Endothelial cell of umbilical vein (primary cell): ENCODE measurements at regions of chr17 and their contacts with region 1.

Region 1: GRCh38 chr17:6913608-6914443 is 82.0 kb upstream of the ALOX12 start:
- DNase-seq: peak; percentile 62
- H3K4me3 ChIP-seq: no peak overlapping the region
- H3K27ac ChIP-seq: no peak overlapping the region
- H3K4me1 ChIP-seq: peaks cover 5% of the 10 kb centered on the region
- H3K27me3 ChIP-seq: peaks cover 36 to 42% of the 10 kb centered on the region in 2 experiments
- CTCF ChIP-seq: peak; percentile 82 to 84
- POLR2A ChIP-seq: no peak

Region 2: DNA sequence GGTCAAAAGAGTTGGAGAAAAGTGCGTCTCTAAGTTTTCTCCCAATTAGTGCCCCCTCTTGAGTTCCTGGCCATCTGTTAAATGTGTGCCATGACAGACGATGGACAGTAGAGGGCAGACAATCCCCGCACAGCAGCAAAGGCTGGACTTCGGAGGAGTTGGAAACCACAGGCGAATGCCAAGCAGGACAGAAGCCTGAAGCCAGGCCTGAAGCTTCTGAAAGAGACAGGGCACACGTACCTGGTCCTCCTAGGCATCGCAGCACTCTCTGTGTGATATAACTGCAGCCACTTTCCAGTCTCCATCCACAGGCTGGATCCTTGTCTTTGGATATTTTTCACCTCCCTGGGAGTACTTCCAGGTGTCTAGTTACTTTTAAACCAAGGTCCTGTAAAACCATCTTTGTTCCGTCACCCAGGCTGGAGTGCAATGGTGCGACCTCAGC is 247.7 kb before region 1 on chr17:
- CTCF ChIA-PET with region 1: interaction called, 23 read pairs
- POLR2A ChIA-PET with region 1: interaction called, 3 read pairs
- dilution Hi-C with region 1: no loop called
- intact Hi-C with region 1: loop called (anchors 2 kb)
- DNase-seq: peak; percentile 82
- H3K4me3 ChIP-seq: no peak overlapping the region
- H3K27ac ChIP-seq: no peak overlapping the region
- H3K4me1 ChIP-seq: no peaks in the 10 kb centered on the region
- H3K27me3 ChIP-seq: peaks cover 7 to 11% of the 10 kb centered on the region in 2 experiments
- CTCF ChIP-seq: peak; percentile 85 to 86
- POLR2A ChIP-seq: no peak

Region 3: GRCh38 chr17:6713130-6713917 is 200.5 kb before region 1 on chr17 and contains the start of gene SLC13A5:
- CTCF ChIA-PET with region 1: no interaction called
- POLR2A ChIA-PET with region 1: no interaction called
- dilution Hi-C with region 1: no loop called
- intact Hi-C with region 1: no loop called
- DNase-seq: peak; percentile 8
- H3K4me3 ChIP-seq: no peak within 1 kb of the TSS
- H3K27ac ChIP-seq: no peak within 1 kb of the TSS
- H3K4me1 ChIP-seq: no peaks in the 10 kb centered on the region
- H3K27me3 ChIP-seq: peaks cover 28 to 32% of the 10 kb centered on the region in 2 experiments
- CTCF ChIP-seq: peak; percentile 12 to 53
- POLR2A ChIP-seq: no peak
- total RNA-seq, gene SLC13A5: not detected in 2 replicates

Region 4: DNA sequence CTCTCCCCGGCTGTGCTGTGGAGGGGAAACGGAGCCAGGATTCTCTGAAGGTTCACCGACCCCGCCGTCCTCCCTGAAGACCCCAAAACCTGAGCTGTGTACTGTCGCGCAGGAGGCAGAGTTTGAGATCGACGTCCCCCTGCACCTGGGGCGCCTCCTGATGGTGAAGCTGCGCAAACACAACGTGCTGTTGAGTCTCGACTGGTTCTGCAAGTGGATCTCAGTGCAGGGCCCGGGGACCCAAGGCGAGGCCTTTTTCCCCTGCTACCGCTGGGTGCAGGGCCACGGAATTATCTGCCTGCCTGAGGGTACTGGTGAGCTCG is 19.7 kb before region 1 on chr17:
- CTCF ChIA-PET with region 1: interaction called, 13 read pairs
- POLR2A ChIA-PET with region 1: no interaction called
- dilution Hi-C with region 1: no loop called
- intact Hi-C with region 1: no loop called
- DNase-seq: peak; percentile 28
- H3K4me3 ChIP-seq: no peak overlapping the region
- H3K27ac ChIP-seq: no peak overlapping the region
- H3K4me1 ChIP-seq: no peaks in the 10 kb centered on the region
- H3K27me3 ChIP-seq: peaks cover 56 to 62% of the 10 kb centered on the region in 2 experiments
- CTCF ChIP-seq: peak; percentile 46 to 71
- POLR2A ChIP-seq: no peak

Region 5: DNA sequence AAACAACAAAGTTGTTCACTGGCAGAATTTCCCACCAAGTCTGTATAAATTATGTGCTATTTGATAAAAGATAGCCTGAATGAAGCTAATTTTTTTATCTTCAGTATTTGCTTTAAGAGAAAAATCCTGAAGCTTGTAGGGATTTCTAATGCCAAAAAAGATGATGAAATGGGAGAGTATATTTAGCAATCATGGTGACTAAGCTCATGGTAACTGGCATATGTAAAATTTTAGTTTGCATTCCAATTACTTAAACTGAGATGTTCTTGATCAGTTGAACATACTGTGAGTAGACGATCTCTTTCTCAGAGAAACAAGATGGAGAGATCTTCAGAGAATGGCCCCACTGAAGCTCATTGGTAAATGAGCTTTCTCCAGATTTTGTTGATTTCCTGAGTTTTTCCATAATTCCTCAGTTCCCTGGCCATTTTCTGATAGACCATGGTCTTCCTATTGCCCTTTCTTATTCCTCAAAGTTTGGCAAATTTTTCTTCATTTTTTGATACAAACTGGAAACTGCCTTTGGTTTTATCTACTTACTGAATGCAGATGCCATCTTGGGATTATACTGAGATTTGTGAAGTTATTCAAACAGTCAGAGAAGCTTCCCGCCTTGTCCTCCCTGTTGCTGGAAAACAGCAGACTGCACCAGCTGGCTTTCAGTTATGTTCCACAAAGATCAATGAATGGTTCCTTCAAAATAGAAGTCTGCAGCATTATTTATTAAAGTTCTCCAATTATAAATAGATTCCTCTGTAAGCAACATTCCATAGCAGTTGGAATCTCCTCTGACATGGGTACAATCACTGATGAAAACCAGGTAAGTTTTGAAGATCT is 13.7 kb after region 1 on chr17:
- CTCF ChIA-PET with region 1: interaction called, 47 read pairs
- POLR2A ChIA-PET with region 1: no interaction called
- dilution Hi-C with region 1: no loop called
- intact Hi-C with region 1: no loop called
- DNase-seq: no peak
- H3K4me3 ChIP-seq: no peak overlapping the region
- H3K27ac ChIP-seq: no peak overlapping the region
- H3K4me1 ChIP-seq: no peaks in the 10 kb centered on the region
- H3K27me3 ChIP-seq: peaks cover 18 to 39% of the 10 kb centered on the region in 2 experiments
- CTCF ChIP-seq: no peak
- POLR2A ChIP-seq: no peak

Region 6: DNA sequence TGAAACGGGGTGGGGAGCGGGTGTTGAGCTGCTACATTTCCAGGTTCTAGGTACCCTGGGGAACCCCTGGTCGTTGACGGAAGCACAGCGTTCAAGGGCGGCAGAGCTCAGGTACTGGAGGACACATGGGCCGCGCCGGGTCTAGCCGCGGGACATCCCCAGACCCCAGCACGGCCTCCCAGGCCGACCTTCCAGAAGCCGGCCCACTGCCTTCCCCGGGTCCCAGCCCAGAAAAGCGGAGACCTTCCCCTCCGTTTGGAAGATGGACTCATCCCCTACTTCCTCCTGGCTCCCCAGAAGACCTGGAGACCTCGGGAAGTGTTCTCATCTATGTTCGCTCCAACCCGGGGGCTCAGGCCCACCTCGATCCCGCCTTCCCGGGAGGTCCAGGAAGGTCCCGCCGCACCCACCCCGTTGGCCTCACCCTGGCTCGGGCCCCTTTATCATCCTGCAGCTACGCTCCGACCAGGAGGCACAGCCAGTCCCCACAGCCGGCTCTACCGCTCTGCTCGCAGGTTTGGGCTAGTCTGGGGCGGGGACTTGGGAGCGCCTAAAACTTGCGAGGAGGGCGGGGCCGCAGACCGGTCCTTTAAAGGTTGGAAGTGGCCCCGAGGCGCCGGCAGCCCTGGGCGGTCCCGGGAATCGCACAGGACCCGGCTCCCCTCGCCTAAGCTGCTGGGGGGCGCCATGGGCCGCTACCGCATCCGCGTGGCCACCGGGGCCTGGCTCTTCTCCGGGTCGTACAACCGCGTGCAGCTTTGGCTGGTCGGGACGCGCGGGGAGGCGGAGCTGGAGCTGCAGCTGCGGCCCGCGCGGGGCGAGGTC is 81.8 kb after region 1 on chr17 and contains the start of gene ALOX12:
- CTCF ChIA-PET with region 1: interaction called, 100 read pairs
- POLR2A ChIA-PET with region 1: no interaction called
- dilution Hi-C with region 1: no loop called
- intact Hi-C with region 1: no loop called
- DNase-seq: no peak
- H3K4me3 ChIP-seq: no peak within 1 kb of the TSS
- H3K27ac ChIP-seq: no peak within 1 kb of the TSS
- H3K4me1 ChIP-seq: no peaks in the 10 kb centered on the region
- H3K27me3 ChIP-seq: no peaks in the 10 kb centered on the region
- CTCF ChIP-seq: no peak
- POLR2A ChIP-seq: no peak
- total RNA-seq, gene ALOX12: not detected in 2 replicates

Region 7: DNA sequence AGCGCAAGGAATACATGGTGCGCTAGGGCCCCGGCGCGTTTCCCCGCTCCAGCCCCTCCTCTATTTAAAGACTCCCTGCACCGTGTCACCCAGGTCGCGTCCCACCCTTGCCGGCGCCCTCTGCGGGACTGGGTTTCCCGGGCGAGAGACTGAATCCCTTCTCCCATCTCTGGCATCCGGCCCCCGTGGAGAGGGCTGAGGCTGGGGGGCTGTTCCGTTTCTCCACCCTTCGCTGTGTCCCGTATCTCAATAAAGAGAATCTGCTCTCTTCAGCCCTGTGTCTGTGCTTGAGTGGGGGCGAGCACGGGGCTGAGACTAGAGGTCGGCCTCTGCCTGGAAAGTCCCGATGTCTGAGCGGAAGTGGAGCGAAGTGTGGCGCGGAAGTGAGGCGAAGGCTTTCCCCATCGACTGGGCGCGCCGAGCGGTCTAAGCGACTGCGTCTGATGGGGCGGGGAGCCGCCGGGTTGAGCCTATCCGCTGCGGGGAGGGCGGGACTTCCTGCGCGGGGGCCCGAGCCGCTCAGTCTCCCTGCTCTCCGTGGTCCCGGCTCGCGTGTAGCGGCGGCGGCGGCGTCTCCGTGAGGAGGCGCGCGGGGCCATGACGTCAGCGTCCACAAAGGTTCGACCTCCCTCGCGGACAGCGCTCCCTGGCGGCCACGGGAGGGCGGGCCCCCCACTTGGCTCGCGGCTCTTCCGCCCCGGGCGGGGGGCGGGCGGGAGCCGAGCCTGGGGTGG is 100.6 kb after region 1 on chr17:
- CTCF ChIA-PET with region 1: interaction called, 58 read pairs
- POLR2A ChIA-PET with region 1: no interaction called
- dilution Hi-C with region 1: no loop called
- intact Hi-C with region 1: loop called (anchors 2 kb)
- DNase-seq: peak; percentile 99
- H3K4me3 ChIP-seq: peak overlapping the region; percentile 32 to 99 (median 93)
- H3K27ac ChIP-seq: peak overlapping the region; percentile 99
- H3K4me1 ChIP-seq: peaks cover 40% of the 10 kb centered on the region
- H3K27me3 ChIP-seq: no peaks in the 10 kb centered on the region
- CTCF ChIP-seq: peak; percentile 53 to 71
- POLR2A ChIP-seq: peak; percentile 80

Region 8: GRCh38 chr17:7136266-7136877 is 222.5 kb after region 1 on chr17:
- CTCF ChIA-PET with region 1: interaction called, 8 read pairs
- POLR2A ChIA-PET with region 1: no interaction called
- dilution Hi-C with region 1: no loop called
- intact Hi-C with region 1: loop called (anchors 5 kb)
- DNase-seq: peak; percentile 73
- H3K4me3 ChIP-seq: no peak overlapping the region
- H3K27ac ChIP-seq: no peak overlapping the region
- H3K4me1 ChIP-seq: peaks cover 18% of the 10 kb centered on the region
- H3K27me3 ChIP-seq: peaks cover 0 to 1% of the 10 kb centered on the region in 2 experiments
- CTCF ChIP-seq: peak; percentile 79 to 89
- POLR2A ChIP-seq: no peak

Region 9: DNA sequence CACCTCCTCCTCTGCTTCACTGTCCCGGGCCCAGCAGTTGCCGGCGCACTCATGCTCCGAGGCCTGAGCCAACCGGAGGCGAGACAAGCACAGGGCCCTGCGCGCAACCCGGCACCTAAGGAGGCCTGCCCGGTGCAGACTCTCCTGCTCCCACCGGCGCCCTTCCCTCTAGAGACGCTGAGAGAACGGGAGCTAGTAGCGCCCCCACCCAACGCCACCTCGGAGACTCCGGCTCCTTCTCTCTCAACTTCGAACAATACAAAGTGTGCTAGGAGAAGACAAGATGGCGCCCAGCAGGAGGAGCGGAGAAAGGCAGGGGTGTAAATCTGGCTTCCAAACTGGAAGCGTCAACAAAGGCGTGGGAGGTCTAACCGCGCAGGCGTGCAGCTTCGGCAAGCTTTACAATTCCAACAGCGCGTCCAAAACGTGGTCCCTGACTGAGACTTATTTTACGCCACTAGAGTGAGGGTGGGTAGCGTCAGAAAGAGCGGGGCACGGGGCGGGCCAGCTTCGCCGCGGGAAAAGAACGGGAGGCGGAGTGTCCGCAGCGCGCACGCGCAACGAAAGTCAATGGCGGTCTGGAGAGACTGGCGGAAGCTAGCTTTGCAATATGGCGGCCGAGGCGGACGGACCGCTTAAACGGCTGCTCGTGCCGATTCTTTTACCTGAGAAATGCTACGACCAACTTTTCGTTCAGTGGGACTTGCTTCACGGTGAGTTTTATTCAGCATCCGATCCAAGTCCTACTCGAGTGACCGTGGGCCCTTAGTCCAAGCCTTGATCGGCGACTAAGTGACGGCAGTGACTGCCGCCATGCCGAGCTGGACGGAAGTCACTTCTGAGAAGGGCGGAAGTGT is 669.7 kb after region 1 on chr17 and contains the start of gene MPDU1:
- CTCF ChIA-PET with region 1: no interaction called
- POLR2A ChIA-PET with region 1: no interaction called
- dilution Hi-C with region 1: no loop called
- intact Hi-C with region 1: no loop called
- DNase-seq: peak; percentile 98
- H3K4me3 ChIP-seq: peak within 1 kb of the TSS; percentile 54 to 90 (median 66)
- H3K27ac ChIP-seq: peak within 1 kb of the TSS; percentile 88
- H3K4me1 ChIP-seq: peaks cover 32% of the 10 kb centered on the region
- H3K27me3 ChIP-seq: no peaks in the 10 kb centered on the region
- CTCF ChIP-seq: no peak
- POLR2A ChIP-seq: peak; percentile 94
- total RNA-seq, gene MPDU1: 61.2 and 78.0 TPM in 2 replicates